Activated T-helper 1 cell treated with anti-CD3 and anti-CD28 coated beads, Interleukin-12 subunit alpha, Interleukin-12 subunit beta, Interleukin-2, Interleukin-4 antibody, amounts not matched to agents 30 ng/mL and 10 ng/mL and 1 ng/mL, durations not matched to agents 14 hours and 24 hours and 36 hours (primary cell): ENCODE measurements at regions of chr4 and their contacts with region 1.

Region 1: GRCh38 chr4:102535398-102536082 is 34.4 kb downstream of the NFKB1 start:
- DNase-seq: no peak
- H3K4me3 Mint-ChIP-seq: peak overlapping the region; percentile 39
- H3K27ac Mint-ChIP-seq: no peak overlapping the region
- H3K4me1 Mint-ChIP-seq: peaks cover 46% of the 10 kb centered on the region
- H3K27me3 Mint-ChIP-seq: no peaks in the 10 kb centered on the region

Region 2: GRCh38 chr4:102390438-102390837 is 145.1 kb before region 1 on chr4:
- intact Hi-C with region 1: loop called (anchors 5 kb)
- DNase-seq: no peak
- H3K4me3 Mint-ChIP-seq: no peak overlapping the region
- H3K27ac Mint-ChIP-seq: peak overlapping the region; percentile 58
- H3K4me1 Mint-ChIP-seq: peaks cover 20% of the 10 kb centered on the region
- H3K27me3 Mint-ChIP-seq: peaks cover 7% of the 10 kb centered on the region

Region 3: GRCh38 chr4:102564399-102565059 is 29.0 kb after region 1 on chr4:
- intact Hi-C with region 1: loop called (anchors 1 kb)
- DNase-seq: no peak
- H3K4me3 Mint-ChIP-seq: no peak overlapping the region
- H3K27ac Mint-ChIP-seq: peak overlapping the region; percentile 69
- H3K4me1 Mint-ChIP-seq: peaks cover 79% of the 10 kb centered on the region
- H3K27me3 Mint-ChIP-seq: no peaks in the 10 kb centered on the region

Region 4: GRCh38 chr4:102586644-102587021 is 51.1 kb after region 1 on chr4:
- intact Hi-C with region 1: loop called (anchors 1 kb)
- DNase-seq: peak; percentile 61
- H3K4me3 Mint-ChIP-seq: peak overlapping the region; percentile 47
- H3K27ac Mint-ChIP-seq: peak overlapping the region; percentile 60
- H3K4me1 Mint-ChIP-seq: peaks cover 86% of the 10 kb centered on the region
- H3K27me3 Mint-ChIP-seq: no peaks in the 10 kb centered on the region

Region 5: DNA sequence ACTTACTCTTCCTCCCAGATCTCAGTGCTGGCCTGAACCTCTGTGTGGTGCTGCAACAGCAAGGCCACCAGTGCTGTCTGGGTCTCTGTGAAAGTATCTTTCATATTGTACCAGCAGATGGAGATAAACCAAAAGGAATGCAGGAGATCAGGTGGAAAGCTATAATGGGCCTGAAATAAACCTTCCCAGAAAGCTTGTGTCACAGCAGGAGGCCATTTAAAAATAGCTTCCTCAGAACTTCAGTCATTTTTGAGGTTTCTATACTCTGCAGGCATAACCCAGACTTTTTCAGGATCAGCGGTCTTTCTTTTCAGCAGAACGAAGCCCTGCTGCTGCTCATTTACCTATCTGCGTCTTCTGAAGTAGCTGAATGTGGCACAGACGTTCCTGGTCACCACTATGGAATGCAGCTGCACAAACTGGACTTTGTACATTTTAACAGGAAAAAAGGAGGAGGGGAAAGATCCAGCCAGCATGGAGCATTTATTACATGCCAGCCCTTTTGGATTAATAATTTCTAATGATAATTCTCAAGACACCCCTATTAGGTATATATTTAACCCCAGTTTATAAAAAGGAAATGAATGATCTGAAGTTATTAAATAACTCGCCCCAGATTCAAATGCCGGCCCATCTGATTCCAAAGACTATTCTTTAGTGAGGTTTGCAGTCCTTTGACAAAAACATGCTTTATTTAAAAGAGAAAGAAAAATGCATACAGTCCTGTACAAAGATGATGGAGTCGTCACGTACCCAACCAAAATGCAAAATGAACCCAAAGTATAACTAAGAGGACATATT is 85.4 kb after region 1 on chr4:
- intact Hi-C with region 1: loop called (anchors 5 kb)
- DNase-seq: no peak
- H3K4me3 Mint-ChIP-seq: no peak overlapping the region
- H3K27ac Mint-ChIP-seq: no peak overlapping the region
- H3K4me1 Mint-ChIP-seq: peaks cover 63% of the 10 kb centered on the region
- H3K27me3 Mint-ChIP-seq: no peaks in the 10 kb centered on the region